Esophagus squamous epithelium (tissue), 5 donors: ENCODE measurements at regions of chr12 and their contacts with region 1.

Region 1: DNA sequence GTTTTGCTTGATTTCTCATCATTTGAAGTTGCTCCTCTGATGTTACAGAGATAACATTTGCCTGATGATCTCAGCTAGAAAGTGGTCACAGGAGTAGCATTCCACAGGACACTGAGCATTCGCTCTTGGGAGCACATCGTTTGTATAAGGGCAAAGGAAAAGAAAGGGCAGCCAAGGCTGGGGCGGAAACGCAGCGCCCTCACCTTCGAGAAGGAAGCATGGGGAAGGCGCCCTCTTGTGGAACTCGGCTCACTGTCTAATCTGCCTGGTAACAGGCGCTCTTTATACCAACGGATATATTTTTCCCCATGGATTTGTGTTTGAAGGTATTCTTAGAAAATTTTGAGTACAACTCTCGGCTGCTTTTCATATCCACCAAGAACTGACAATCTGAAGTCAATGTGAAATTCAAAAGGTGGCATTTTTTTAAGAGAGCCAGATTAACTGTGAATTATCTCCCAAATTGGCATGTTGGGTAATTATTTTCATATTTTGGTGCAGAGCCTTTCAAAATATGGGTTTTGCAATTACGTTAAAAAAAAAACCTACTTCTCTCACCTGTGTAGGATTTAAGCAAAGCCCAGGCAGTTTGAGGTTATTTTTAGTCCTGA is 172.7 kb downstream of the CAND1 start:
- DNase-seq: peak; percentile 2
- H3K4me3 ChIP-seq: no peak overlapping the region
- H3K27ac ChIP-seq: peak overlapping the region in 1 of 4 donors; percentile 21
- H3K4me1 ChIP-seq: peaks cover 0 to 13% (median 3%) of the 10 kb centered on the region in 3 donors
- H3K27me3 ChIP-seq: no peaks in the 10 kb centered on the region
- CTCF ChIP-seq: peak; percentile 73 to 90 (median 78)
- POLR2A ChIP-seq: no peak

Region 2: DNA sequence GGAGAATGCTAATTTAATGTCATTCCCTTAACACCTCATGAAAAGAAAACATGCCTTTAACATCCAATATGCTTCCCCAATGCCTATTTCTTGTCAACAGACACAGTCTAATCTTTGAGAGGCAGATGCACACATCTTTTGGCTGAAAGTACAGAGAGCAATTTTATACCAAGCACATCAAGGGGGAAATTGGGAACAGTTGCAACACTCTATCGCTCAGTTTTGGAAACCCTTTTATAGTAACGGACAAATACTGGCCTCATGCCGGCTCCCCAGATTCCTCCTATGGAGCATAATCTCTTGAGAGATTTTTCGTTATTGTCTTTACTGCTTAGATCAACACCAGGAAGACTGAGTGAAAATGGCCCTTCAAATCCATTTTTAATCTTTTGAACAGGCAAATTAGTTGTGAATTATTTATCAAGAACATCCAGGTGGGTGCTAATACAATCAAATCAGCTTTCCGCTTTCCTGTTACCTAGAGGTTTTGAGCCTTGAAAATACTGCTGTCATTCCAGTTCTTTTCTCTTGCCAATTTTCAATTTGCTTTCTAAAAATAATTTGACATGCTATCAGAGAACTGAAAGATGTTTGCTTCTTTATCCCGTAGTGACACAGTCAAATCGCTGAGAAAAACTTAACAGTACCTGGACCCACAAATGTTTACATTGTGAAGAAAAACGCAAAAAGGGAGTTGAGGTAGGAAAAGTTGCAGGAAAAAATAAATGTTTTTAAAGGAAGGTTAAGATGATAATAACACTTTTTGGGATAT is 233.4 kb before region 1 on chr12:
- intact Hi-C with region 1: no loop called
- DNase-seq: no peak
- H3K4me3 ChIP-seq: no peak overlapping the region
- H3K27ac ChIP-seq: no peak overlapping the region
- H3K4me1 ChIP-seq: no peaks in the 10 kb centered on the region
- H3K27me3 ChIP-seq: peaks cover 0 to 3% (median 0%) of the 10 kb centered on the region in 4 donors
- CTCF ChIP-seq: no peak
- POLR2A ChIP-seq: no peak

Region 3: DNA sequence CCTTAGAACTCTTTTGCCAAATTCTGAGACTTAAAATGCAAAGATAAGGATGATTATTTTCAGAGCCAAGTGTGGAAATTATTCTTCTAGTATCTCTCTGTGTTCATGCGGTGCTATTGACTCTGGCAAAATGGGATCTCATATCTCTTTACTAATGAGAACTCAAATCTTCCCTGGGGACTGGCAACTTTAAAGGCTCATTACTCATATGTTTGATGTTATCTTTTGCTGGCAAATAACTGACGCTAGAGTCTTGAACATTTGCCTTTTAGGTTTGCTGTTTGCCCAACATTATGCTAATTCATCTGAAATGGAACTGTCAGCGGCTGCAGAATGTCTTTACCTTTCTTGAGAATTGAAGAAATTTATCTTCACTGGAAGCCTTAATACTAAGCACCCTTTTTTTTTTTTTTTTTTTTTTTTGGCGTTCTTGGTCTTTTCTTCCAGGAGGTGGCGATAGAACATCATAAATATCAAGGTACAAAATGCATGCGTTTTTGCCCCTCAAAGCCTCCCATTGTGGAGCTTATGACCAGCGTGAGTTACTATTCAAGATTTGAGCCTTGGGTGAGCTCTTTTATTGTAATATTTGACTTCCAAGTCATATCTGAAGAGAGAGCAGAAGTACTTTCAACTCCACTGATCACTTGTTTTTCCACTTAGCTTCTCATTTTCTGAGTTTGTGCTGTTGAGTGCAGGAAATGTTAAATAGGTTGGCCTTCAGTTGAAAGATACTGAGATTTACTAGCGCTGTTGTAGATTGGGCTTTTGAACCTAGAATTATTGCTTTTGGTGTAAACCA is 86.1 kb before region 1 on chr12:
- intact Hi-C with region 1: loop called (anchors 10 kb)
- DNase-seq: no peak
- H3K4me3 ChIP-seq: no peak overlapping the region
- H3K27ac ChIP-seq: no peak overlapping the region
- H3K4me1 ChIP-seq: peaks cover 0 to 18% (median 0%) of the 10 kb centered on the region in 3 donors
- H3K27me3 ChIP-seq: no peaks in the 10 kb centered on the region
- CTCF ChIP-seq: peak; percentile 31 to 53 (median 45)
- POLR2A ChIP-seq: no peak

Region 4: GRCh38 chr12:67534681-67535080 is 92.8 kb after region 1 on chr12:
- intact Hi-C with region 1: no loop called
- DNase-seq: no peak
- H3K4me3 ChIP-seq: no peak overlapping the region
- H3K27ac ChIP-seq: peak overlapping the region in 1 of 4 donors; percentile 9
- H3K4me1 ChIP-seq: peaks cover 7 to 37% (median 13%) of the 10 kb centered on the region in 3 donors
- H3K27me3 ChIP-seq: no peaks in the 10 kb centered on the region
- CTCF ChIP-seq: no peak
- POLR2A ChIP-seq: no peak

Region 5: GRCh38 chr12:67943226-67943892 is 501.5 kb after region 1 on chr12:
- intact Hi-C with region 1: loop called (anchors 10 kb)
- DNase-seq: no peak
- H3K4me3 ChIP-seq: no peak overlapping the region
- H3K27ac ChIP-seq: no peak overlapping the region
- H3K4me1 ChIP-seq: peaks cover 0 to 3% (median 0%) of the 10 kb centered on the region in 3 donors
- H3K27me3 ChIP-seq: no peaks in the 10 kb centered on the region
- CTCF ChIP-seq: peak; percentile 66 to 81 (median 74)
- POLR2A ChIP-seq: no peak